Ovary (tissue), 10 donors: ENCODE measurements at regions of chr1 and their contacts with region 1.

Region 1: GRCh38 chr1:179310721-179311120 is 17.1 kb downstream of the SOAT1 start:
- DNase-seq: no peak
- H3K4me3 ChIP-seq: no peak overlapping the region
- H3K27ac ChIP-seq: no peak overlapping the region
- H3K4me1 ChIP-seq: peaks cover 5% of the 10 kb centered on the region
- H3K27me3 ChIP-seq: no peaks in the 10 kb centered on the region
- CTCF ChIP-seq: no peak
- EP300 ChIP-seq: no peak
- POLR2A ChIP-seq: no peak

Region 2: GRCh38 chr1:179081687-179082332 is 228.9 kb before region 1 on chr1 and contains the start of gene TOR3A:
- intact Hi-C with region 1: no loop called
- DNase-seq: peak; percentile 88 to 93 (median 90)
- H3K4me3 ChIP-seq: peak within 1 kb of the TSS; percentile 95
- H3K27ac ChIP-seq: peak within 1 kb of the TSS; percentile 47 to 61
- H3K4me1 ChIP-seq: peaks cover 4% of the 10 kb centered on the region
- H3K27me3 ChIP-seq: no peaks in the 10 kb centered on the region
- CTCF ChIP-seq: peak in 1 of 3 donors; percentile 16
- EP300 ChIP-seq: no peak
- POLR2A ChIP-seq: peak; percentile 67
- total RNA-seq, gene TOR3A: 19.2 to 55.0 (median 26.7) TPM

Region 3: DNA sequence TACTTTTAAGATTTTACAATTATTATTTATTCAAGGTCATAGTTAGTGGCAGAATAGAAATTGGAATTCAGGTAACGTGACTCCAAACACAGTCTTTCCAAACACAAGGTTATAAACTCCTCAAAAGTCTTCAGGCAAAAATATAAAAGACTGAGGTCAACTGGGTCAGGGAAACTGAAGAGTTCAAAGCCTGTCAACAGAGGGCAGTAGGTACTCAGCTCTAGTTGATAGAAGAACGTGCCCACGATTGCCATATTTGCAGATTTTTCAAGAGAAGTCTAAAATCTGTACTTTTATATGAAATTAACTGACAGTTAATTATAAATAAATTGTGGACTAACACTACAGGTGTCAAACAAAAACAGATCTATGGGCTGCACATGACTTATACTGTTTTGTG is 1054.3 kb after region 1 on chr1:
- intact Hi-C with region 1: loop called in 1 of 4 experiments (anchors 10 kb)
- DNase-seq: no peak
- H3K4me3 ChIP-seq: no peak overlapping the region
- H3K27ac ChIP-seq: no peak overlapping the region
- H3K4me1 ChIP-seq: peaks cover 5% of the 10 kb centered on the region
- H3K27me3 ChIP-seq: no peaks in the 10 kb centered on the region
- CTCF ChIP-seq: no peak
- EP300 ChIP-seq: no peak
- POLR2A ChIP-seq: no peak